Mammary epithelial cell (primary cell): ENCODE measurements at regions of chr19 and their contacts with region 1.

Region 1: GRCh38 chr19:48445606-48446481 is at the start of gene GRWD1:
- DNase-seq: peak; percentile 98
- H3K4me3 ChIP-seq: peak within 1 kb of the TSS; percentile 69 to 92 (median 80)
- H3K27ac ChIP-seq: peak within 1 kb of the TSS; percentile 88
- H3K4me1 ChIP-seq: peaks cover 22% of the 10 kb centered on the region
- H3K27me3 ChIP-seq: peaks cover 19% of the 10 kb centered on the region
- CTCF ChIP-seq: peak in 1 of 2 donors; percentile 18
- total RNA-seq, gene GRWD1: 35.3 to 45.9 TPM

Region 2: GRCh38 chr19:48110350-48110966 is 335.4 kb before region 1 on chr19 and contains the start of gene PLA2G4C:
- CTCF ChIA-PET with region 1: no interaction called
- dilution Hi-C with region 1: no loop called
- in situ Hi-C with region 1: no loop called
- intact Hi-C with region 1: loop called (anchors 1 kb)
- DNase-seq: peak; percentile 85
- H3K4me3 ChIP-seq: peak within 1 kb of the TSS; percentile 42 to 44 (median 44)
- H3K27ac ChIP-seq: peak within 1 kb of the TSS; percentile 63
- H3K4me1 ChIP-seq: peaks cover 11% of the 10 kb centered on the region
- H3K27me3 ChIP-seq: no peaks in the 10 kb centered on the region
- CTCF ChIP-seq: no peak
- total RNA-seq, gene PLA2G4C: 2.7 to 3.2 TPM

Region 3: DNA sequence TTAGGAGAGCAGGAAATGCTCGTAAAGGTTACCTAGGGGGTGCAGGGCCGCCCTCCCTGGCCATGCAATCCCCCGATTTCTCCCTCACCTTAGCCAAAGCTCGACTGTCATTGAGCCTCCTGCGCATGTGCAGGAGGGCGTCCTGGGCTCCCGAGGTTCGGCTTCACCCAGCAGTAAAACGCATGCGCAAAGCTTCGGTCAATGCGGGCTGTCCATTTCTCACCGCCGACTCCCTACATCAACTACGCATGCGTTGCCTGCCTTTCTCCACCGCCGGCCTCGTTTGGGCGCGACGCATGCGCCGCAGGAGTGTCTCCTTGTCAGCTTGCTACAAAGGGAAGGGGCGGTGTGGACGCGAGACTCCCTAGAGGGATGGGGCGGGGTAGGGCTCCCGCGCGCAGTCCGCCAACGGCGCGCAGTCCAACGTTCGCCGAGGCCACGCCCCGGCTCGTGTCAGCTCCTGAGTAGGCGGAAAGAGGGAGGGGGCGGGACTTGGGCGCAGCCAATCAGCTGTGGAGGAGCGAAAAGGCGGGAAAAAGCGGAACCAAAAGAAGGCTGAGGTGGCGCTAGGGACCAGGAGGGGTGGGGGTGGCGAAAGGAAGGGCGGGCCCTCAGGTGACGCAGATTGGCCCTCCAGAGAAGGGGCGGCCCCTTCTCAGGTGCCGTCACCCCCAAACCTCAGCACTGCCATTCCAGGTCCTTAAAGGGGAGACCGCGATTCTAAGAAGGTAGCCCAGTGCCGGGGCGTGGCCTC is 81.9 kb before region 1 on chr19 and contains the starts of genes SYNGR4 and TMEM143:
- CTCF ChIA-PET with region 1: interaction called, 8 read pairs
- dilution Hi-C with region 1: loop called (anchors 5 kb)
- in situ Hi-C with region 1: no loop called
- intact Hi-C with region 1: no loop called
- DNase-seq: peak; percentile 99
- H3K4me3 ChIP-seq: peak within 1 kb of the TSS; percentile 41 to 58 (median 50)
- H3K27ac ChIP-seq: peak within 1 kb of the TSS; percentile 79
- H3K4me1 ChIP-seq: peaks cover 8% of the 10 kb centered on the region
- H3K27me3 ChIP-seq: no peaks in the 10 kb centered on the region
- CTCF ChIP-seq: no peak
- total RNA-seq, gene SYNGR4: not detected
- total RNA-seq, gene TMEM143: 4.5 to 9.0 TPM

Region 4: DNA sequence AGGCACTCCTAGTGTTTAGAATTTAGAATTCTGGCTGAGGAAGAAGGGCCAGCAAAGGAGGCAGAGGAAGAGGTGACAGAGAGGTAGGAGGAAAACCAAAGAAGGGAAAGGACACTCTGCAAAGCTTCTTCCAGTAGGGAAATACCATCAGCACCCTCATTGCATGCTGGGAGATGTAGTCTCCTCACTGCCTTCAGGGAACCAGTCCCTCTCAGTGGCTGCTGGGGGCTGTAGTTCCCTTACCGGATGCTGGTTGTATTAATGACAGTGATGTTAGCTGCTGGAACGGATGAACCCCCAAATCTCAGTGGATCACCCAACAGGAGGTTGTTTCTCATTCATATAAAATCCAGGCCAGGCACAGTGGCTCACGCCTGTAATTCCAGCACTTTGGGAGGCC is 42.2 kb before region 1 on chr19:
- CTCF ChIA-PET with region 1: no interaction called
- dilution Hi-C with region 1: loop called (anchors 5 kb)
- in situ Hi-C with region 1: no loop called
- intact Hi-C with region 1: no loop called
- DNase-seq: peak; percentile 54
- H3K4me3 ChIP-seq: no peak overlapping the region
- H3K27ac ChIP-seq: no peak overlapping the region
- H3K4me1 ChIP-seq: no peaks in the 10 kb centered on the region
- H3K27me3 ChIP-seq: no peaks in the 10 kb centered on the region
- CTCF ChIP-seq: no peak

Region 5: GRCh38 chr19:48487996-48488395 is 42.2 kb after region 1 on chr19:
- CTCF ChIA-PET with region 1: interaction called, 5 read pairs
- dilution Hi-C with region 1: no loop called
- in situ Hi-C with region 1: no loop called
- intact Hi-C with region 1: loop called (anchors 1 kb)
- DNase-seq: peak; percentile 92
- H3K4me3 ChIP-seq: no peak overlapping the region
- H3K27ac ChIP-seq: peak overlapping the region; percentile 75
- H3K4me1 ChIP-seq: peaks cover 37% of the 10 kb centered on the region
- H3K27me3 ChIP-seq: no peaks in the 10 kb centered on the region
- CTCF ChIP-seq: no peak